Tibial artery (tissue), 4 donors: ENCODE measurements at regions of chr12 and their contacts with region 1.

Region 1: GRCh38 chr12:23949348-23950209 is at the start of gene SOX5:
- DNase-seq: peak; percentile 24 to 75
- H3K4me3 ChIP-seq: peak within 1 kb of the TSS; percentile 47 to 51
- H3K27ac ChIP-seq: peak within 1 kb of the TSS in 1 of 2 donors; percentile 38
- H3K4me1 ChIP-seq: peaks cover 0 to 24% (median 5%) of the 10 kb centered on the region in 4 donors
- H3K27me3 ChIP-seq: peaks cover 0 to 2% of the 10 kb centered on the region in 2 donors
- CTCF ChIP-seq: no peak

Region 2: DNA sequence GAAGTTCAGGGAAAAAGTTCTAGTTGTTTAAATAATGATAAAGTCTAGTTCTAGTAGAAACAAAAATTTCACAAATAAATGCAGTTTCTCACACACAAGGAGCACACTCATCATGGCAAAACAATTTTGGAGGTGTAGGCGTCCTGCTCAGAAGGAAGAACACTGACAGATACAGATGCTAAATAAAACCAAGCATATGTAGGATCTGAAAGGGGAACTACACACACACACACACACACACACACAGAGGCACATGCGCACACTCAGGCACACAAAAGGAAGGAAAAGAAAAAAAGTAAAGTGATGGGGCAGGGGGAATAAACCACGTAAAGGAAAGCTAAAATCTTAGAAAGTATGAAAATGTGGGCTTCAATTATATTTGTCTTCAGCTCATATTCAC is 117.8 kb before region 1 on chr12:
- intact Hi-C with region 1: no loop called
- DNase-seq: no peak
- H3K4me3 ChIP-seq: no peak overlapping the region
- H3K27ac ChIP-seq: no peak overlapping the region
- H3K4me1 ChIP-seq: no peaks in the 10 kb centered on the region
- H3K27me3 ChIP-seq: no peaks in the 10 kb centered on the region
- CTCF ChIP-seq: no peak

Region 3: DNA sequence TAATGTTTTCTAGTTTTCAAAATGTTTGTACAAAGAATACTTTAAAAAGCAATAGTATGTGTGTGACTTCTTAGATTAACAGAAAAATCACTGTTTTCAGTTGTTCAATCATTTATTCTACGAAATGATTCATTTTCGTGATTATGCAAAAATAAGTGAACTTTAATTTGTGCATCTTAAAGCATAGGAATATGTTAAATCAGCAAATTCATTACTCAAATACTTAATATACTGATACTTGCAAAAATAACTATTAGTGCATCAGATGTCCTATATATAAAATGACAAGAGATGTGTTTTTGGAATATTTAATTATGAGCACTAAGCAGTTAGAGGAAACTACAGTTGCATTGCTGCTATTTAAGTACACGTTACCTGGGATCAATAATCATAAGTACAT is 11.2 kb before region 1 on chr12:
- intact Hi-C with region 1: loop called (anchors 1 kb)
- DNase-seq: no peak
- H3K4me3 ChIP-seq: no peak overlapping the region
- H3K27ac ChIP-seq: no peak overlapping the region
- H3K4me1 ChIP-seq: no peaks in the 10 kb centered on the region
- H3K27me3 ChIP-seq: no peaks in the 10 kb centered on the region
- CTCF ChIP-seq: no peak